ENCODE measurements at regions of chrX and their contacts with region 1.

Region 1: DNA sequence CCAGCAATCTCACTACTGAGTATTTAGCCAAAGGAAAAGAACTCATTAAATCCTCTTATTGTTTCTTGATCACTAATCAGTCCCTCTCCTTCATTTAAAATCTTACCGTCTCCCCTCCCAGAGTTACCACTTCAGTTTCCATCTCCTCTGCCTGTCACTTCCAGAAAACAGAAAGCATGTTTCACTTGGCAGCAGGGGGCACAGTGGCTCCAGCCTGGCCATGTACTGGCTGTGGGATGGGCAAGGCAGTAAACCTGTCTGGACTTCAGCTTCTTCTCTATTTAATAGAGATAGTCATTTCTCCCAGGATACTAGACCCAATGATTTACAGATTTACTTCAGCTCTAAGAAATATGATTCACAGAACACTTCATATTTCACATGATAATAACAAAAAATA is 63.2 kb downstream of the CD40LG start:
- DNase-seq: peak in 2 of 4 experiments; percentile 7 to 32
- ATAC-seq: peak; percentile 77
- H3K4me3 ChIP-seq: no peak overlapping the region
- H3K27ac ChIP-seq: no peak overlapping the region
- H3K4me1 ChIP-seq: peaks cover 0 to under 1% of the 10 kb centered on the region in 2 experiments; a peak in 2 of 5 replicates
- H3K27me3 ChIP-seq: no peaks in the 10 kb centered on the region
- CTCF ChIP-seq: peak; percentile 41 to 63 (median 46); a peak in 5 of 6 replicates
- EP300 ChIP-seq: no peak
- POLR2A ChIP-seq: no peak
- RAD21 ChIP-seq: peak; percentile 34 to 72; a peak in 3 of 4 replicates

Region 2: DNA sequence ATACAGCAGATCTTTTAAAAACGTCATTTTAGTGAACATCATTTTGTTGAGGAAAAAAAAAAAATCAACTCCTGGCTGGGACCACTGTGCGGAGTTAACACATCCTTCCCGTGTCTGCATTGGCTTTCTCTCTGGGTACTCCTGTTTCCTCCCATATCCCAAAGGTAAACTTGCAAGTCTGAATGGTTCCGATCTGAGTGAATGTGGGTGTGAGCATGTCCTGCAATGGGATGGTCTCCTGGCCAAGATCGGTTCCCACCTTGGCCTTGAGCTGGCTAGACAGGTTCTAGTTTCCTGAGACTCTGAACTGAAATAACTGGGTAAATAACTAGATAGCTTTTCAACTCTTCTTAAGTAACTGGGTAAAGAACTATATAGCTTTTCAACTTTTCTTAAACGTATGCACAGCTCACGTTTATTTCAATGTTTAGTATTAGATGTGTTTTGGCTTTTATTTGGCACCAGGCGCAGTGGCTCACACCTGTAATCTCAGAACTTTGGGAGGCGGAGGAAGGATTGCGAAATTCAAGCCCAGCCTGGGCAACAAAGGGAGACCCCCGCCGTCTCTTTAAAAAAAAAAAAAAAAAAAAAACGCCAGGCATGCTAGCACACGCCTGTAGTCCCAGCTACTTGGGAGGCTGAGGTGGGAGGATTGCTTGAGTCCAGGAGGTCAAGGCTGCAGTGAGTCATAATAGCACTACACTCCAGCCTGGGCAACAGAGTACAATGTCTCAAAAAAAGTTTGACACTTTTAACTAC is 155.4 kb after region 1 on chrX:
- CTCF ChIA-PET with region 1: no interaction called
- POLR2A ChIA-PET with region 1: interaction called, 3 read pairs
- in situ Hi-C with region 1: no loop called
- intact Hi-C with region 1: loop called (anchors 10 kb)
- DNase-seq: no peak
- ATAC-seq: peak; percentile 43
- H3K4me3 ChIP-seq: no peak overlapping the region
- H3K27ac ChIP-seq: peak overlapping the region; percentile 33; the same call in 1 of the 3 replicates
- H3K4me1 ChIP-seq: no peaks in the 10 kb centered on the region; a peak in 1 of 5 replicates
- H3K27me3 ChIP-seq: no peaks in the 10 kb centered on the region
- CTCF ChIP-seq: no peak
- EP300 ChIP-seq: no peak
- POLR2A ChIP-seq: 0 out of 2 replicates have a peak, but pooled peaks have one; percentile 51
- RAD21 ChIP-seq: no peak

Region 3: DNA sequence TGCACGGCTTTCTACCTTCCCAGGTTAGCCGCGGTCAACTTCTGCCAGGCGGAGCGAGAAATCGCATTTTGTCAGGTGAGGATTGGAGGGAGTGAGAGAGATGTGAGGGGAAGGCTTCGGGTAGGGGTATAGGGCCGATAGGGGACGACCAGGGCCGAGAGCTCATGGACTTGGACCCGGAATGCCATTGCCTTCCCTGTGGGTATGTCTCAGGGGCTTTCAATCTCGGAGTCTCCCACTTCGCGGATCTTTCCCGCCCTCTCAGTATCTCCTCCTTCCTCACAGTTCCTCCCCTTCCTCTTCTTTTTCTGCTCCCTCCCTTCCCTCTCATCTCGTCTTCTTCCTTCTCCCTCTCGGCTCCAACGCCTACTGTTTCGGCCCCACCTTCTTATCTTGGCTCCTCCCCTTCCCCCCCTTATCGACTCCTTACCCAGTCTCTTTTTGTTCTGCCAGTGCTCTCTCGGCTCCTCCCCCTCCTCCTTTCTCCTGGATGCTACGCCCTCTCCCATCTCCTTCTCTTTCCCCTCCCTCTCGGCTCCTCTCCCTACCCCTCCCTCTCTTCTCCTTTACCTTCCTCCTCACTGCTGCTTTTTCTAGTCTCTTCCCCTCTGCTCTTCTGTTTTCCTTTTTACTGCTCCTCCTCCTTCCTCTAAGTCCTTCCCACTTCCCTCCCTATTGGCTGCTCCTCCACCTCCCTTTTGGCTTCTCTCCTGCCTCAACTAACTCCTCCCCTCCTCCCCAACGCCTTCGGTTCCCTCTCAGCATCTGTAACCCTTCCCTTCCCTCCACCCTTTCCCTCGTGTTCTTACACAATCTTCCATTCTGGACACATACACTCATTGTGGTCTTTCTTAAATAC is 198.8 kb after region 1 on chrX:
- CTCF ChIA-PET with region 1: no interaction called
- POLR2A ChIA-PET with region 1: no interaction called
- in situ Hi-C with region 1: no loop called
- intact Hi-C with region 1: loop called (anchors 5 kb)
- DNase-seq: peak; percentile 80 to 96 (median 88)
- ATAC-seq: peak; percentile 85
- H3K4me3 ChIP-seq: peak overlapping the region; percentile 58
- H3K27ac ChIP-seq: peak overlapping the region; percentile 82
- H3K4me1 ChIP-seq: peaks cover 12 to 15% of the 10 kb centered on the region in 2 experiments
- H3K27me3 ChIP-seq: no peaks in the 10 kb centered on the region
- CTCF ChIP-seq: no peak
- EP300 ChIP-seq: no peak
- POLR2A ChIP-seq: peak; percentile 89
- RAD21 ChIP-seq: 0 out of 4 replicates have a peak, but pooled peaks of 1 of the 2 experiments have one; percentile 2

Region 4: GRCh38 chrX:136920001-136920400 is 208.9 kb after region 1 on chrX:
- CTCF ChIA-PET with region 1: interaction called, 13 read pairs
- POLR2A ChIA-PET with region 1: no interaction called
- in situ Hi-C with region 1: loop called (anchors 10 kb)
- intact Hi-C with region 1: loop called (anchors 1 kb)
- DNase-seq: no peak
- ATAC-seq: no peak
- H3K4me3 ChIP-seq: no peak overlapping the region
- H3K27ac ChIP-seq: no peak overlapping the region; the same call in 2 of the 3 replicates
- H3K4me1 ChIP-seq: no peaks in the 10 kb centered on the region; a peak in 1 of 5 replicates
- H3K27me3 ChIP-seq: no peaks in the 10 kb centered on the region
- CTCF ChIP-seq: no peak
- EP300 ChIP-seq: no peak
- POLR2A ChIP-seq: no peak
- RAD21 ChIP-seq: no peak

Region 5: GRCh38 chrX:136941396-136942337 is 230.5 kb after region 1 on chrX:
- CTCF ChIA-PET with region 1: no interaction called
- POLR2A ChIA-PET with region 1: no interaction called
- in situ Hi-C with region 1: no loop called
- intact Hi-C with region 1: no loop called
- DNase-seq: no peak
- ATAC-seq: no peak
- H3K4me3 ChIP-seq: no peak overlapping the region
- H3K27ac ChIP-seq: no peak overlapping the region
- H3K4me1 ChIP-seq: no peaks in the 10 kb centered on the region
- H3K27me3 ChIP-seq: no peaks in the 10 kb centered on the region
- CTCF ChIP-seq: no peak
- EP300 ChIP-seq: no peak
- POLR2A ChIP-seq: no peak
- RAD21 ChIP-seq: no peak

Measured in K562 (cell line).